ENCODE measurements at regions of chr5 and their contacts with region 1.

Region 1: GRCh38 chr5:68953875-68954617 is 139.8 kb upstream of the SLC30A5 start:
- DNase-seq: no peak
- ATAC-seq: peak; percentile 69 to 80
- H3K4me3 ChIP-seq: no peak overlapping the region
- H3K27ac ChIP-seq: no peak overlapping the region
- H3K4me1 ChIP-seq: peaks cover 13% of the 10 kb centered on the region
- H3K27me3 ChIP-seq: no peaks in the 10 kb centered on the region

Region 2: GRCh38 chr5:68884883-68885282 is 69.2 kb before region 1 on chr5:
- intact Hi-C with region 1: loop called in 2 of 4 experiments (anchors 10 kb)
- DNase-seq: no peak
- ATAC-seq: no peak
- H3K4me3 ChIP-seq: no peak overlapping the region
- H3K27ac ChIP-seq: no peak overlapping the region
- H3K4me1 ChIP-seq: peaks cover 1% of the 10 kb centered on the region
- H3K27me3 ChIP-seq: no peaks in the 10 kb centered on the region

Measured in right cardiac atrium (tissue), 5 donors.